ENCODE measurements at regions of chr10 and their contacts with region 1.

Region 1: DNA sequence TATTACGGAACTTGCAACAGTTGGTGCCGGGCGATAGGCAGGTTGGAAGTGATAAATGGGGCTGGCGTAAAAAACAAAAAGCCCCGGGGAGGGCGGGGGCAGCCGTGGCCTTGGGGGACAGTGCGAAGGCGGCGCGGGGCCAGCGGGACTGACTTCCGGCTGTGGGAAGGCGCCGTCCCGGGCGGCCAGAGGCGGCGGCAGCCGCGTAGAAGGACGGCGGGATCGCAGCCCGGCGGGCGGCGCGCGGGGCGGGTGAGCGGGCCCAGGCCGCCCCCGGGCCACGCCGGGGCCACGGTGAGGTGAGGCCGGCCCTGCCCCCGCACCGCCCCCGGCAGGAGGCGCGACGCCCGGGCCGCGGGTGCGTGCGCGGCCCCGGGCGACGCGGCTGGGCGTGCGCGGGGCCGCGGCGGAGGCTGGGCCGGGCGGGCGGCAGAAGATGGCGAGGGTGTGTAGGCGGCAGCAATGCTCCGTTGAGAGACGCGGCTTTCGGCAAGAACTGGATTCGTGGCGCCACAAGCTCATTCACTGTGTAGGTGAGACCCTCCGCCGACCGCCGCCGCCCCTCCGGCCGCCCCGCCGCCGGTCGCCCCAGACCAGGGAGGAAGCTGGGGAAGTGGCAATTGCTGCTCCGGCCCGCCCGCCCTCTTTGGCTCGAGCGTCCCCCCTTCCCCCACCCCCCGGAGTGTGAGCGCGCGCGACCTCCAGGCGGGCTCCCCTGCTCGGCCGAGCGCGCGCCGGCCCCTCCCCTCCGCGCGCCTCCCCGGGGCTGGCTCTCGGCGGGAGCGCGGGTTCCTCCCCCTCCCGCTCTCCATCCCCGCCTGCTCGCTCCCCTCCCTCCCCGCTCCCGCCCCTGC is at the start of gene LCOR:
- DNase-seq: peak; percentile 82 to 91 (median 86)
- H3K4me3 ChIP-seq: peak within 1 kb of the TSS; percentile 66 to 93 (median 80)
- H3K4me3 Mint-ChIP-seq: peak within 1 kb of the TSS; percentile 87 to 90
- H3K27ac ChIP-seq: peak within 1 kb of the TSS; percentile 70 to 88
- H3K27ac Mint-ChIP-seq: peak within 1 kb of the TSS; percentile 90 to 97 (median 94)
- H3K4me1 ChIP-seq: peaks cover 41 to 55% of the 10 kb centered on the region in 2 donors
- H3K4me1 Mint-ChIP-seq: peaks cover 52% of the 10 kb centered on the region
- H3K27me3 ChIP-seq: no peaks in the 10 kb centered on the region
- H3K27me3 Mint-ChIP-seq: peaks cover 0 to 3% (median 0%) of the 10 kb centered on the region in 3 donors
- CTCF ChIP-seq: no peak
- polyA plus RNA-seq, gene LCOR: 5.7 to 11.8 (median 10.0) TPM

Region 2: DNA sequence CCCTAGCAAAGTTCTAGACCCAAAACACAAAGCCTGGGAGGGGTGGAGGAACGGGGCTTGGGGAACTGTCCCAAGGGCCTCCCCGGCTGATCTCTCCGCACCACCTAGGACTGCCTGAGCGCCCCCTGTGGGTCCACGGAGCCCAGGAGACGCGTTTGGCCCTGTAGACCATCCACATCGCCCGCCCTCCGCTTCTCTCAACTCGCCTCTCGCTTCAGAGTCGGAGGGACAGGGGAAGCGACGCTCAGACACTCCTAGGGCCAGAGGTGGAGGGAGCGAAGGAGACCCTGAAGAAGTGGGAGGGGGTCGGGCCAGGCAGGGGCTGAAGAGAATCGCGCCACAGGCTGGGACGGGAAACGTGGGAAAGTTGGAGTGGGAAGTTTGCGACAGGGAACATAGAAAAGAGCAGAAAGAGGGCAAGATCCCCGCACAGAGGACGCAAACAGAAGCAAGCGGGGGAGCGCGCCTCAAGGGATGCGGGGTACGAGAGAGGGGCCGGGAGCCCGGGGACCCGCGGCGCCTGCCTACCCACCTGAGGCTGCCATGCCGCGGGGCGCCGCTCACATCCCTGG is 112.2 kb before region 1 on chr10:
- intact Hi-C with region 1: loop called in 1 of 2 experiments (anchors 5 kb)
- DNase-seq: peak; percentile 74 to 85 (median 81)
- H3K4me3 ChIP-seq: peak overlapping the region; percentile 67 to 99 (median 86)
- H3K4me3 Mint-ChIP-seq: peak overlapping the region; percentile 99 to 100
- H3K27ac ChIP-seq: peak overlapping the region; percentile 90 to 92
- H3K27ac Mint-ChIP-seq: peak overlapping the region; percentile 97 to 100 (median 98)
- H3K4me1 ChIP-seq: peaks cover 54 to 55% of the 10 kb centered on the region in 2 donors
- H3K4me1 Mint-ChIP-seq: peaks cover 49% of the 10 kb centered on the region
- H3K27me3 ChIP-seq: no peaks in the 10 kb centered on the region
- H3K27me3 Mint-ChIP-seq: peaks cover 0 to 3% (median 0%) of the 10 kb centered on the region in 3 donors
- CTCF ChIP-seq: peak; percentile 89

Region 3: DNA sequence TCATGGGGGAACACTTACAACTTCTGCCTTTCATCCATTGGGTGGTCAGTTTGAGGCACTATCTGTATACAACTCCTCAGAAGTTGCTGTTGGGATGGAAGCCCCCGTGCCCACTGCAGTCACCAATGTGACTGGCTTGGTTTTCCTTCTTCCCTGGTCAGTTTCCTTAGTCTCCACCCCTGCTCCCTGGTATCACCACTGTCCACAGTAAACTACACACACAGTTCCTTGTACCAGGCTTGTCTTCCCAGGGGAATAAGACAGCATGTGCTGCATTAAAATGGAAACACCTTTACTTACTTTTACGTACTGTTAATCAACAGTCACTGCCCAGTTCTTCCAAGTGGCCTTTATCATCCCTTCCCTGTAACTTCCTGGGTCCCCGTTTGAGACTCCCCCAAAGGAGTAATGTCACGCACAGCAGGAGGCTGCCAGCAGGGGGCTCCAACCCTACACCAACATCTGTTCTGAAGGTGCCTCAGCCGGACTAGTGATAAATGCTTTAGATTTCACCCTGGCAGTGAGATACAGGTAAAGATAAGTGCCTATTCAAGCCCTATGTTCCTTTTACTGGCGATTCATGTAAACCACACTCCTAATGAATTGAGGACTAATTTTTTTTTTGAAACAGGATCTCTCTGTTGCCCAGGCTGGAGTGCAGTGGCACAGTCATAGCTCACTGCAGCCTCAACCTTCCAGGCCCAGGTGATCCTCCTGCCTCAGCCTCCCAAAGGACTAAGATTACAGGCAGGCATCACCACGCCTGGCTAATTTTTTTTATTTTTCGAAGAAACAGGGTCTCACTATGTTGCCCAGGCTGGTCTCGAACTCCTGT is 66.5 kb before region 1 on chr10:
- intact Hi-C with region 1: loop called (anchors 5 to 10 kb)
- DNase-seq: peak; percentile 57 to 78 (median 77)
- H3K4me3 ChIP-seq: no peak overlapping the region
- H3K4me3 Mint-ChIP-seq: no peak overlapping the region
- H3K27ac ChIP-seq: no peak overlapping the region
- H3K27ac Mint-ChIP-seq: no peak overlapping the region
- H3K4me1 ChIP-seq: peaks cover 6 to 8% of the 10 kb centered on the region in 2 donors
- H3K4me1 Mint-ChIP-seq: peaks cover 18% of the 10 kb centered on the region
- H3K27me3 ChIP-seq: no peaks in the 10 kb centered on the region
- H3K27me3 Mint-ChIP-seq: peaks cover 0 to 3% (median 2%) of the 10 kb centered on the region in 3 donors
- CTCF ChIP-seq: peak; percentile 92

Region 4: DNA sequence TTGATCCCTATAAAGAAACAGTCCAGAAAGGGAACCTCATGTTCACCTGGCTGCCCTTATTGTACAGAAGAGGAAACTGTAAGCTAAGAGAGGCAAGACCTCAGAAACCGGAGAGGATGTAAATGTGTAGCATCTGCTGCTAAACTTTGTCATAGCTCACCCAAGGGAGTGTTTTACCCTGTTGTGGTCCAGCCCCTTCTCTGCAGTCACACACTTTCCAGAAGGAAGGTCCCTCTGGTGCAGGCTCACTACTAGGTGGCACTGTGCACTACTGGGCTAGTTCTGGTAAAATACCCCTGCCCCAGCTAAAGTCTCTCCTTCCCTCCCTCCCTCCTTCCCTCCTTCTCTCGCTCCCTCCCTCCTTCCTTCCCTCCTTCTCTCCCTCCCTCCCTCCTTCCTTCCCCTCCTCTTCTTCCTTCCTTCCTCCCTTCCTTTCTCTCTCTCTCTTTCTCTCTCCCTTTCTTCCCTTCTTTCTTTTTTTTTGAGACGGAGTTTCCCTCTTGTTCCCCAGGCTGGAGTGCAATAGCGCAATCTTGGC is 42.5 kb before region 1 on chr10:
- intact Hi-C with region 1: no loop called
- DNase-seq: peak in 2 of 3 donors; percentile 6 to 24
- H3K4me3 ChIP-seq: no peak overlapping the region
- H3K4me3 Mint-ChIP-seq: no peak overlapping the region
- H3K27ac ChIP-seq: no peak overlapping the region
- H3K27ac Mint-ChIP-seq: peak overlapping the region in 1 of 7 donors; percentile 73
- H3K4me1 ChIP-seq: peaks cover 0 to 4% of the 10 kb centered on the region in 2 donors
- H3K4me1 Mint-ChIP-seq: peaks cover 6% of the 10 kb centered on the region
- H3K27me3 ChIP-seq: no peaks in the 10 kb centered on the region
- H3K27me3 Mint-ChIP-seq: peaks cover 0 to 6% (median 3%) of the 10 kb centered on the region in 3 donors
- CTCF ChIP-seq: no peak